Activated CD4-positive, alpha-beta memory T cell treated with anti-CD3 and anti-CD28 coated beads, Interleukin-2, amount 10 ng/mL, durations not matched to agents 7 days and 5 days (primary cell): ENCODE measurements at regions of chr16 and their contacts with region 1.

Region 1: DNA sequence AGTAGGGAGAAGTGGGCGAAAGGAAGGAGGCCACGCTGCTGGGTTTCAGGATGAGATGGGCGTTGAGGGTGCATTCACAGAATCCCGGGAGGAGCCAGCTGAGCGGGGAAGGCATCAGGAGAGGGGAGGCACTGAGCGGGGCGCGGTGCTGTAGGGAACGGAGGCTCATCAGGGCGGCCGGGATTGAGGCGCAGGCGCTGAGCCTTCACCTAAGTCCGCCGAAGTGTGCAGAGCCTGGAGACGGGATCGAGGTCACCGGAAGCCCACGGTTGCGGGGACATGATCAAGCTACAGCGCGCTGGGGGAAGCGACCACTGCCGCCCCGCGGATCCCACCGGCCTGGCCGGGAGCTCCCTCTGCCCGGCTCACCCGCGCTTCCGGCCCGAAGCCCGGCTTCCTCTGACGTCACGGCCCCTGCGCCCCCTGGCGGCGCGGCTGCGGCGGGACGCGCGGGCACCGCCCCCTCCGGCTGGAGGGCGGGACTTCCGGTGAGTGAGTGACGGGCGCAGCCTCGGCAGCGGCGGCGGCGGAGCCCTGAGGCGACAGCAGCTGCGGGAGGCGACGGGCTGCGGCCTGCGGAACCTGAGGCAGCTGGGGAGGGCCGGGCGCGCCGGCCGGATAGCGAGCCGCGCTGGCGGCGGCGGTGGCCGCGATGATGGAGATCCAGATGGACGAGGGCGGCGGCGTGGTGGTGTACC is at the start of gene MAPK8IP3:
- DNase-seq: peak; percentile 96
- H3K4me3 Mint-ChIP-seq: peak within 1 kb of the TSS; percentile 98
- H3K27ac Mint-ChIP-seq: peak within 1 kb of the TSS; percentile 99
- H3K4me1 Mint-ChIP-seq: peaks cover 31% of the 10 kb centered on the region
- H3K27me3 Mint-ChIP-seq: no peaks in the 10 kb centered on the region
- total RNA-seq, gene MAPK8IP3: 93.4 to 96.8 TPM

Region 2: DNA sequence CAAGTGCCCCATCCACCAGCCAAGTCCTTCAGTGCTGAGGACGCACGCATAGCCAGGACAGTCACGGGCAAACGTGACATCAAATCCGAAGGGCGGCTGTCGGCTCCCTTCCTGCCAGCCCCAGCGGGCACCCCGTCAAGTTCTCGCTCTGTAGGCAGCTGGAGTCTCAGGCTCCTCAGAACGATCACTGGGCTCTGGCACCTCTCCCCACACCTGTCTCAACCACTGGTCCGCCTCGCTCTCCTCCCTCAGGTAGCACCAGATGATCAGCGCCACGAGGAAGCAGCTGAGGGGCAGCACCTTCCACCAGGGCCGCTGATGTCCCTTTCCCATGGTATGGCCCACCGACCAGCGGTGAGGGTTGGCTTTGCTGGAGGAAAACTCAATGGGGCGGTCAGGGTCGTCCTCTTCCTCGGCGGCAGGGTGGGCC is 285.7 kb before region 1 on chr16:
- CTCF ChIA-PET with region 1: interaction called, 12 read pairs
- POLR2A ChIA-PET with region 1: interaction called, 15 read pairs
- DNase-seq: peak; percentile 24
- H3K4me3 Mint-ChIP-seq: peak overlapping the region; percentile 86
- H3K27ac Mint-ChIP-seq: peak overlapping the region; percentile 98
- H3K4me1 Mint-ChIP-seq: peaks cover 39% of the 10 kb centered on the region
- H3K27me3 Mint-ChIP-seq: no peaks in the 10 kb centered on the region

Region 3: GRCh38 chr16:1584926-1585482 is 120.8 kb before region 1 on chr16:
- CTCF ChIA-PET with region 1: no interaction called
- POLR2A ChIA-PET with region 1: no interaction called
- DNase-seq: no peak
- H3K4me3 Mint-ChIP-seq: no peak overlapping the region
- H3K27ac Mint-ChIP-seq: no peak overlapping the region
- H3K4me1 Mint-ChIP-seq: no peaks in the 10 kb centered on the region
- H3K27me3 Mint-ChIP-seq: no peaks in the 10 kb centered on the region

Region 4: GRCh38 chr16:1610276-1611017 is 95.4 kb before region 1 on chr16:
- CTCF ChIA-PET with region 1: interaction called, 6 read pairs
- POLR2A ChIA-PET with region 1: interaction called, 25 read pairs
- DNase-seq: peak; percentile 92
- H3K4me3 Mint-ChIP-seq: peak overlapping the region; percentile 86
- H3K27ac Mint-ChIP-seq: peak overlapping the region; percentile 100
- H3K4me1 Mint-ChIP-seq: peaks cover 36% of the 10 kb centered on the region
- H3K27me3 Mint-ChIP-seq: no peaks in the 10 kb centered on the region

Region 5: DNA sequence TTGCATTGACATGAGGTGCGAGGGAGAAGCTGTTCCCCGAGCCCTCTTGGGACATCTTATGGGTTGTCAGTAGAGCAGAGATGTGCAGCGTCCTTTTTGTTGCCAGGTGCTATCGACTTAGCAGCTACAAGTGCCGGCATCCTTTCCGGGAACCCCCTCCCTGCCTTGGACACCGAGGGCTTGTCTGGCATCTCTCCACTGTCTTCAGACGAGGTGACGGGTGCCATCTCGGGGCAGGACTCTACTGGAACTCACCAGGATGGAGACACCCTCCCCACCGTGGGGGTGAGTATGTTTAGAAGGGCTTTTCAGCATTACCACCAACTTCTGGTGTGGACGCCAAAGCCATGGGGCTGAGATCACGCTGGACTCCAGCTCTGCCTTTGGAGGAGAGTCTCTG is 39.5 kb before region 1 on chr16:
- CTCF ChIA-PET with region 1: no interaction called
- POLR2A ChIA-PET with region 1: no interaction called
- DNase-seq: no peak
- H3K4me3 Mint-ChIP-seq: no peak overlapping the region
- H3K27ac Mint-ChIP-seq: no peak overlapping the region
- H3K4me1 Mint-ChIP-seq: no peaks in the 10 kb centered on the region
- H3K27me3 Mint-ChIP-seq: no peaks in the 10 kb centered on the region

Region 6: GRCh38 chr16:1677802-1678496 is 27.9 kb before region 1 on chr16 and contains the start of gene JPT2:
- CTCF ChIA-PET with region 1: interaction called, 37 read pairs
- POLR2A ChIA-PET with region 1: interaction called, 49 read pairs
- DNase-seq: peak; percentile 97
- H3K4me3 Mint-ChIP-seq: peak within 1 kb of the TSS; percentile 81
- H3K27ac Mint-ChIP-seq: peak within 1 kb of the TSS; percentile 77
- H3K4me1 Mint-ChIP-seq: peaks cover 40% of the 10 kb centered on the region
- H3K27me3 Mint-ChIP-seq: no peaks in the 10 kb centered on the region
- total RNA-seq, gene JPT2: 44.9 to 48.9 TPM

Region 7: DNA sequence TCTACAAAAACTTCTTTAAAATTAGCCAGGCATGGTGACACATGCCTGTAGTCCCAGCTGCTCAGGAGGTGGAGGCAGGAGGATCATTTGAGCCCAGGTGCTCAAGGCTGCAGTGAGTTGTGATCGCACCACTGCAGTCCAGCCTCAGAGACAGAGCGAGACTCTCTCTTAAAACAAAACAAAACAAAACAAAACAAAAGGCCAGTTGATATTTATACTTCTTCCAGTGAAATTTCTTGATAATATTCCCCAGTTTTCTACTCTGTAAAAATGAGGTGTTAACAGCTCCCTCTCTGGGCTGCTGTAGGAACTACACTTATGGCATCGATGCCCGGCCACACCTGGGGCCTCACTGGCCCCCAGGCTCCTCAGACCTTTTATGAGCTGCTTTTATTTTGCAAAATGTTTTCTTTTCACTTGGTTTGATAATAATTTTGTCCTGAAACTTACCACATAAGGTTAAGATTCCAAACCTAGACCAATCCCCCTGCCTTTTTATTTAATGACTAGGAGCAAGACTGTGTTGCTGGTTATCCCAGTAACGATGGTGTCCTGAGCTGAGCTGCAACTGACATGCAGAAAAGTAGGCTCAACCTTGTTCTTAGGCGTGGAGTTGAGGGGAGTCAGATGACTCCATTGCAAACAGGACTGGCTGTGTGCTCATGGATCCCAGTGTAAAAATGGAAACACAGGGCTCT is 17.8 kb after region 1 on chr16:
- CTCF ChIA-PET with region 1: interaction called, 27 read pairs
- POLR2A ChIA-PET with region 1: interaction called, 6 read pairs
- DNase-seq: peak; percentile 48
- H3K4me3 Mint-ChIP-seq: no peak overlapping the region
- H3K27ac Mint-ChIP-seq: peak overlapping the region; percentile 49
- H3K4me1 Mint-ChIP-seq: peaks cover 37% of the 10 kb centered on the region
- H3K27me3 Mint-ChIP-seq: no peaks in the 10 kb centered on the region

Region 8: DNA sequence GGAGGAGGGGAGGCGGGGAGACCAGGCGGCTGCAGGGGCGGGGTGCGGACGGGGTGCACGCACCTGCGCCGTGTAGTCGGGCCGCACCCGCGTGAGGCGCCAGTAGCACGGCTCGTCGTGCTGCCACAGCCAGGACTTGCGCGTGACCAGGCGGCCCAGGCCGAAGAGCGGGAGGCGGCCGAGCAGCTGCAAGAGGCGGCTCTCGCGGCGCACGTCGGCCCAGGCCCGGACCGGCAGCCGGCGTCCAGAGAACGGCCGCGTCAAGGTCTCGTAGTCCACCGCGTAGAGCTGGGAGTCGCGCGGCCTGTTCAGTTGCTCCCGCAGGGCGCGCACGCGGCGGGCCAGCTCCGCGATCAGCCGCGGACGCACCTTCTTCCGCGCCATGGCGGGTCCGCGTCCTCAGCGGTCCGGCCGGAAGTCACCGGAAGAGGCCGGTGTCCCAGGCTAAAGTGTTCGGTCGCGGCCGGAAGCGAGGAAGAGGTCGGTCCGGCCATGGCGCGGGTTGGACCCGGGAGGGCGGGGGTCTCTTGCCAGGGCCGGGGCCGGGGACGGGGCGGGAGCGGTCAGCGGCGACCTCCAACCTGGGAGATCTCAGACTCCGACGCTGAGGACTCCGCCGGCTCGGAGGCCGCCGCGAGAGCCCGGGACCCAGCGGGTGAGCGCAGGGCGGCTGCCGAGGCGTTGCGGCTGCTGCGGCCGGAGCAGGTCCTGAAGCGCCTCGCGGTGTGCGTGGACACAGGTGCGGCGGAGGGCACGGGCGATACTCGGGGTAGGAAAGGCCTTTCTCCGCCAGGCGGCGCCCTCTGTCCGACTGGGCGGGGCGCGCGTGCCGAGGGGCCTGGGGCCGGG is 67.1 kb after region 1 on chr16 and contains the starts of genes EME2 and MRPS34:
- CTCF ChIA-PET with region 1: interaction called, 12 read pairs
- POLR2A ChIA-PET with region 1: interaction called, 46 read pairs
- DNase-seq: peak; percentile 84
- H3K4me3 Mint-ChIP-seq: peak within 1 kb of the TSS; percentile 98
- H3K27ac Mint-ChIP-seq: peak within 1 kb of the TSS; percentile 97
- H3K4me1 Mint-ChIP-seq: peaks cover 14% of the 10 kb centered on the region
- H3K27me3 Mint-ChIP-seq: no peaks in the 10 kb centered on the region
- total RNA-seq, gene EME2: 23.5 to 24.7 TPM
- total RNA-seq, gene MRPS34: 94.9 to 98.3 TPM

Region 9: DNA sequence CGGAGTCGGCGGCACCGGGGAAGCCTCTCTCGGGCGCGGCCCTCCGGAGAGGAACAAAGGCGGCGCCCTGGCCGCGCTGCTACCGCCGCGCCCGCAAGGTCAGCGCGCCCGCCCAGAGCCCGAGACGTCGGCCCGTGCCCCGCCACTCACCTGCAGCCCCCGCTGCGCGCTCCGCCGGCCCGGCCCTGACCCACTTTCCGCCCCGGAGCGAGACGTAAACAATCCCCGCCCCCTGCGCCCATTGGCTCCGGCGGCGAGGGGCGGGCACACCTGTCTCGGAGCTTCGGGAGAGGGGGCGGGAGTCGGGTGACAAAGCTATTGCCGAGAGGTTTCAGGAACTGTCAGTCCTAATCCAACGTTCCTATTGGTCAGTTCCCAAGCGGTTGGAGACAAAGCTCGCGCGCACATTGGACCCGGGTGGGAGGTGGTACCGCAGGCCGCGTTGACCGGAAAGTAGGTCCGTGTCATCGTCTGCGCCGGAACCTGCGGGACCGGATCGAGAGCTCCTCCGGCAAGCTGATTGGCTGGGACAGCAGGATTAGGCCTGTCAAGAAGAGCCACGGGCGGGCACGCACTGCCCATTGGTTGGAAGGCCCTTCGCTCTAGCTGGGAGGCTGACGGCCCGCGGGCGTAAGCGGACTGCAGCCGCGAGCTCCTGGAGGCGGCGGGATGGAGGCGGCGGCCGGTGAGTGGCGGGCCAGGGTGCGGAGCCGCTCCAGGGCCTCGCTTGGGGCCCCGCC is 76.7 kb after region 1 on chr16 and contains the starts of genes NUBP2 and SPSB3:
- CTCF ChIA-PET with region 1: interaction called, 32 read pairs
- POLR2A ChIA-PET with region 1: interaction called, 8 read pairs
- DNase-seq: peak; percentile 99
- H3K4me3 Mint-ChIP-seq: peak within 1 kb of the TSS; percentile 91
- H3K27ac Mint-ChIP-seq: peak within 1 kb of the TSS; percentile 77
- H3K4me1 Mint-ChIP-seq: peaks cover 22% of the 10 kb centered on the region
- H3K27me3 Mint-ChIP-seq: no peaks in the 10 kb centered on the region
- total RNA-seq, gene NUBP2: 40.8 to 43.5 TPM
- total RNA-seq, gene SPSB3: 46.4 to 47.7 TPM

Region 10: DNA sequence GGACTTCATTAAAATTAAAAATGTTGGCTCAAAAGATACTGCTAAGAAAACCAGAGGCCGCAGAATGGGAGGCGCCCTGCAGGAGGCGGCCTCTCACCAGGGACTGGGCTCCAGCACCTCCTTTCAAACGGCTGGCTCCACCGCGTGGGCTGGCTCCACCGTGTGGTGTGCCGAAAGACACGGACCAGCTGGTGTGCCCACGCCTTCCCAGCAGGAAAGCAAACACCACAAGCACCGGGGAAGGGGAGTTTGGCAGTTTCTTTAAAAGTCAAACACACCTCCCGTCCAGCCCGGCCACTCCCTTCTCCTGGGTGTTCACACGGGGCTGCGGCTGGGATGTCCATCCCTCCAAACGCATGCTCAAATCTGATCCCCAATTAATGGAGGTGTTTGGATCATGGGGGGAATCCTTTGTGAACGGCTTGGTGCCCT is 106.9 kb after region 1 on chr16:
- CTCF ChIA-PET with region 1: no interaction called
- POLR2A ChIA-PET with region 1: no interaction called
- DNase-seq: peak; percentile 55
- H3K4me3 Mint-ChIP-seq: no peak overlapping the region
- H3K27ac Mint-ChIP-seq: no peak overlapping the region
- H3K4me1 Mint-ChIP-seq: peaks cover 2% of the 10 kb centered on the region
- H3K27me3 Mint-ChIP-seq: no peaks in the 10 kb centered on the region